ENCODE measurements at regions of chr16 and their contacts with region 1.

Region 1: GRCh38 chr16:89860747-89861304 is 12.6 kb upstream of the TCF25 start:
- DNase-seq: peak; percentile 69 to 82 (median 74)
- H3K4me3 ChIP-seq: no peak overlapping the region
- H3K4me3 Mint-ChIP-seq: peak overlapping the region in 4 of 7 donors; percentile 6 to 46 (median 26)
- H3K27ac ChIP-seq: no peak overlapping the region
- H3K27ac Mint-ChIP-seq: peak overlapping the region; percentile 6 to 83 (median 64)
- H3K4me1 ChIP-seq: peaks cover 33% of the 10 kb centered on the region
- H3K4me1 Mint-ChIP-seq: peaks cover 31 to 38% (median 38%) of the 10 kb centered on the region in 3 donors
- H3K27me3 ChIP-seq: no peaks in the 10 kb centered on the region
- H3K27me3 Mint-ChIP-seq: peaks cover 0 to 3% of the 10 kb centered on the region in 2 donors

Region 2: GRCh38 chr16:89084411-89084810 is 776.4 kb before region 1 on chr16:
- CTCF ChIA-PET with region 1: no interaction called
- POLR2A ChIA-PET with region 1: no interaction called
- DNase-seq: no peak
- H3K4me3 ChIP-seq: no peak overlapping the region
- H3K4me3 Mint-ChIP-seq: peak overlapping the region in 2 of 7 donors; percentile 5 to 64
- H3K27ac ChIP-seq: no peak overlapping the region
- H3K27ac Mint-ChIP-seq: peak overlapping the region in 4 of 8 donors; percentile 36 to 74 (median 56)
- H3K4me1 ChIP-seq: no peaks in the 10 kb centered on the region
- H3K4me1 Mint-ChIP-seq: no peaks in the 10 kb centered on the region
- H3K27me3 ChIP-seq: no peaks in the 10 kb centered on the region
- H3K27me3 Mint-ChIP-seq: peaks cover 3 to 16% of the 10 kb centered on the region in 2 donors

Region 3: GRCh38 chr16:89711601-89712273 is 149.1 kb before region 1 on chr16:
- CTCF ChIA-PET with region 1: interaction called, 120 read pairs
- POLR2A ChIA-PET with region 1: no interaction called
- DNase-seq: peak; percentile 59 to 81 (median 76)
- H3K4me3 ChIP-seq: peak overlapping the region; percentile 43
- H3K4me3 Mint-ChIP-seq: peak overlapping the region in 4 of 7 donors; percentile 19 to 65 (median 52)
- H3K27ac ChIP-seq: peak overlapping the region; percentile 43
- H3K27ac Mint-ChIP-seq: peak overlapping the region in 1 of 8 donors; percentile 50
- H3K4me1 ChIP-seq: peaks cover 10% of the 10 kb centered on the region
- H3K4me1 Mint-ChIP-seq: peaks cover 0 to 9% (median 7%) of the 10 kb centered on the region in 3 donors
- H3K27me3 ChIP-seq: no peaks in the 10 kb centered on the region
- H3K27me3 Mint-ChIP-seq: no peaks in the 10 kb centered on the region

Region 4: GRCh38 chr16:89791278-89791995 is 69.4 kb before region 1 on chr16:
- CTCF ChIA-PET with region 1: interaction called, 20 read pairs
- POLR2A ChIA-PET with region 1: no interaction called
- DNase-seq: no peak
- H3K4me3 ChIP-seq: no peak overlapping the region
- H3K4me3 Mint-ChIP-seq: no peak overlapping the region
- H3K27ac ChIP-seq: no peak overlapping the region
- H3K27ac Mint-ChIP-seq: peak overlapping the region in 3 of 8 donors; percentile 7 to 70 (median 61)
- H3K4me1 ChIP-seq: peaks cover 6% of the 10 kb centered on the region
- H3K4me1 Mint-ChIP-seq: peaks cover 15 to 18% (median 17%) of the 10 kb centered on the region in 3 donors
- H3K27me3 ChIP-seq: no peaks in the 10 kb centered on the region
- H3K27me3 Mint-ChIP-seq: no peaks in the 10 kb centered on the region

Region 5: GRCh38 chr16:89842471-89843408 is 18.1 kb before region 1 on chr16:
- CTCF ChIA-PET with region 1: interaction called, 17 read pairs
- POLR2A ChIA-PET with region 1: no interaction called
- DNase-seq: no peak
- H3K4me3 ChIP-seq: no peak overlapping the region
- H3K4me3 Mint-ChIP-seq: peak overlapping the region in 1 of 7 donors; percentile 31
- H3K27ac ChIP-seq: no peak overlapping the region
- H3K27ac Mint-ChIP-seq: peak overlapping the region in 1 of 8 donors; percentile 60
- H3K4me1 ChIP-seq: peaks cover 30% of the 10 kb centered on the region
- H3K4me1 Mint-ChIP-seq: peaks cover 24 to 44% (median 30%) of the 10 kb centered on the region in 3 donors
- H3K27me3 ChIP-seq: no peaks in the 10 kb centered on the region
- H3K27me3 Mint-ChIP-seq: no peaks in the 10 kb centered on the region

Region 6: DNA sequence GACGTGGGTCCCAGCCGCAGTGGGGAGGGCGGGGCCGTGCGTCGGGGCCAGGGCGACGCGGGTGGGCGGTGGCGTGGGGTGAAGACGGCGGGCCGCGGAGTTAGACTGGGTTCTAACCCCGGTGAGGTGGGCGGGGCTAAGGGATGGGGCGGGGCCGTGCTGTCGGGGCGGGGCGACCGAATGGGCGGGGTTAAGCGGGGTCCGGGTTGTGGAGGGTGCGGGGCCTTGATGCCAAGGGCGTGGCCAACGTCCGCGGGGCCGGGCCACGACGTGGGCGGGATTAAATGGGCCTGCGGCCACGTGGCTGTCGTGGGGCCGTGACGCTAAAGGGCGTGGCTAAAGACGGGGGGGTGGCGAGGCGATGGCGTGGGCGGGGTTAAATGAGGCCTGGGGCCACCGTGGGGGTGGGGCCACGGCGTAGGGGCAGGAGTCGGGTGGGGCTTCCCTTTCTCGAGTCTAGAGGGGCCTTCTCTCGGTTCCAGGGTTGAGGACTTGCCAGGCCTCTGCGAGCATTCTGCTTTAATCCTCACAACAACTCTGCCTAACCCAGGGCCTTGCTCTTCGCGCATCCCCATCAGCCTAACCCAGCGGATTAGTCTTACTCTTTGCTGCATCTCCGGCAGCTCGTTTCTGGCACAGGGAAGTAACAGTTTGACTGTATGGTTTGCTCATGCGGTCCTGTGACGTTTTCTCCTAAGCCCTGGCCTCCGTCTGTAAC is 13.3 kb after region 1 on chr16:
- CTCF ChIA-PET with region 1: interaction called, 25 read pairs
- POLR2A ChIA-PET with region 1: interaction called, 18 read pairs
- DNase-seq: peak; percentile 90 to 95 (median 94)
- H3K4me3 ChIP-seq: peak overlapping the region; percentile 82
- H3K4me3 Mint-ChIP-seq: peak overlapping the region; percentile 90 to 97 (median 93)
- H3K27ac ChIP-seq: peak overlapping the region; percentile 98
- H3K27ac Mint-ChIP-seq: peak overlapping the region; percentile 98 to 100 (median 98)
- H3K4me1 ChIP-seq: peaks cover 21% of the 10 kb centered on the region
- H3K4me1 Mint-ChIP-seq: peaks cover 18 to 28% (median 21%) of the 10 kb centered on the region in 3 donors
- H3K27me3 ChIP-seq: no peaks in the 10 kb centered on the region
- H3K27me3 Mint-ChIP-seq: no peaks in the 10 kb centered on the region

Region 7: GRCh38 chr16:89909777-89910716 is 49.2 kb after region 1 on chr16:
- CTCF ChIA-PET with region 1: interaction called, 16 read pairs
- POLR2A ChIA-PET with region 1: interaction called, 3 read pairs
- DNase-seq: peak; percentile 53 to 75 (median 61)
- H3K4me3 ChIP-seq: no peak overlapping the region
- H3K4me3 Mint-ChIP-seq: peak overlapping the region in 1 of 7 donors; percentile 28
- H3K27ac ChIP-seq: no peak overlapping the region
- H3K27ac Mint-ChIP-seq: no peak overlapping the region
- H3K4me1 ChIP-seq: peaks cover 6% of the 10 kb centered on the region
- H3K4me1 Mint-ChIP-seq: peaks cover 0 to 21% (median 8%) of the 10 kb centered on the region in 3 donors
- H3K27me3 ChIP-seq: no peaks in the 10 kb centered on the region
- H3K27me3 Mint-ChIP-seq: no peaks in the 10 kb centered on the region

Region 8: GRCh38 chr16:89981414-89981813 is 120.6 kb after region 1 on chr16:
- CTCF ChIA-PET with region 1: no interaction called
- POLR2A ChIA-PET with region 1: no interaction called
- DNase-seq: no peak
- H3K4me3 ChIP-seq: no peak overlapping the region
- H3K4me3 Mint-ChIP-seq: no peak overlapping the region
- H3K27ac ChIP-seq: no peak overlapping the region
- H3K27ac Mint-ChIP-seq: no peak overlapping the region
- H3K4me1 ChIP-seq: no peaks in the 10 kb centered on the region
- H3K4me1 Mint-ChIP-seq: peaks cover 0 to 9% (median 0%) of the 10 kb centered on the region in 3 donors
- H3K27me3 ChIP-seq: no peaks in the 10 kb centered on the region
- H3K27me3 Mint-ChIP-seq: no peaks in the 10 kb centered on the region

Measured in CD8-positive, alpha-beta memory T cell (primary cell).